ENCODE measurements at regions of chr5 and their contacts with region 1.

Region 1: DNA sequence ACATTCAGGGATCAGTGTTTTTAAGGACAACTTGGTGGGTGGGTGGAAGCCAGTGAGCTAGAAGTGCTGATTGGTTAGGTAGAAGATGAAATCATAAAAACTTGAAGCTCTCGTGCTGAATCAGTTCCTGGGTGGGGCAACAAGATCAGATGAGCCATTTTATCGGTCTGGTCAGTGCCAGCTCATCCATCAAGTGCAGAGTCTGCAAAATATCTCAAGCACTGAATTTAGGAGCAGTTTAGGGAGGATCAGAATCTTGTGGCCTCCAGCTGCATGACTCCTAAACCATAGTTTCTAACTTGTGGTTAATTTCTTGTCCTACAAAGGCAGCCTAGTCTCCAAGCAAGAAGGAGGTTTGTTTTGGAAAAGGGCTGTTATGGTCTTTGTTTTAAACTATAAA is 166.4 kb downstream of the FAM170A start:
- DNase-seq: no peak
- H3K4me3 ChIP-seq: no peak overlapping the region
- CTCF ChIP-seq: no peak
- POLR2A ChIP-seq: no peak

Region 2: DNA sequence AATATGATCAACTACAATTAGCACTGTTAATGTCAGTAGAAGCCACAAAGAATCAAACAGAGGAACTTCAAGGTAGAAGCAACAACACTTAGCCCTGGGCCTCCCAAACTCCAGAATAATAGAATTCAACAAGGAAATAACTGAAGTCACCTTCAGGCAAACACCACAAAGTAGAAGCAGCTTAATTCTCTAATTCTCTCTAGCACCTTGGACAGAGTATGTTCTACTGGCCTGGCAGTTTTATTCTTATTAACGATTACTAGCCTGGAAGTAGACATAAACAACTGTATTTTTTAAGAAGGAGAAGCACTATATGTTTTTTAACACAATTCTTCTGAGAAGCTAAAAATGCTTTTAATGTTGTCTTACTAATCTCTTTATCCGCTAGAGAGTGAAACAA is 1719.3 kb before region 1 on chr5:
- intact Hi-C with region 1: loop called (anchors 5 kb)
- DNase-seq: no peak
- H3K4me3 ChIP-seq: no peak overlapping the region
- CTCF ChIP-seq: no peak
- POLR2A ChIP-seq: no peak